ENCODE measurements at regions of chr5 and their contacts with region 1.

Region 1: GRCh38 chr5:149551200-149552037 is at the start of gene CSNK1A1:
- DNase-seq: peak; percentile 98 to 99 (median 99)
- H3K4me3 ChIP-seq: peak within 1 kb of the TSS; percentile 88 to 94
- H3K4me3 Mint-ChIP-seq: peak within 1 kb of the TSS; percentile 94 to 99 (median 98)
- H3K27ac ChIP-seq: peak within 1 kb of the TSS; percentile 97
- H3K27ac Mint-ChIP-seq: peak within 1 kb of the TSS; percentile 95 to 100 (median 98)
- H3K4me1 ChIP-seq: peaks cover 37% of the 10 kb centered on the region
- H3K4me1 Mint-ChIP-seq: peaks cover 18 to 52% (median 27%) of the 10 kb centered on the region in 4 donors
- H3K27me3 ChIP-seq: no peaks in the 10 kb centered on the region
- H3K27me3 Mint-ChIP-seq: no peaks in the 10 kb centered on the region
- total RNA-seq, gene CSNK1A1: 175 to 189 TPM

Region 2: GRCh38 chr5:149240354-149240998 is 310.9 kb before region 1 on chr5:
- CTCF ChIA-PET with region 1: no interaction called
- POLR2A ChIA-PET with region 1: interaction called, 6 read pairs
- intact Hi-C with region 1: loop called (anchors 5 kb)
- DNase-seq: peak; percentile 78 to 91 (median 88)
- H3K4me3 ChIP-seq: peak overlapping the region; percentile 26 to 34
- H3K4me3 Mint-ChIP-seq: peak overlapping the region; percentile 25 to 80 (median 64)
- H3K27ac ChIP-seq: peak overlapping the region; percentile 49
- H3K27ac Mint-ChIP-seq: peak overlapping the region; percentile 81 to 95 (median 89)
- H3K4me1 ChIP-seq: peaks cover 35% of the 10 kb centered on the region
- H3K4me1 Mint-ChIP-seq: peaks cover 29 to 57% (median 37%) of the 10 kb centered on the region in 4 donors
- H3K27me3 ChIP-seq: no peaks in the 10 kb centered on the region
- H3K27me3 Mint-ChIP-seq: no peaks in the 10 kb centered on the region

Region 3: GRCh38 chr5:149268928-149269557 is 282.4 kb before region 1 on chr5:
- CTCF ChIA-PET with region 1: no interaction called
- POLR2A ChIA-PET with region 1: no interaction called
- intact Hi-C with region 1: no loop called
- DNase-seq: peak in 4 of 5 donors; percentile 42 to 62 (median 59)
- H3K4me3 ChIP-seq: no peak overlapping the region
- H3K4me3 Mint-ChIP-seq: peak overlapping the region in 1 of 8 donors; percentile 33
- H3K27ac ChIP-seq: no peak overlapping the region
- H3K27ac Mint-ChIP-seq: peak overlapping the region in 1 of 7 donors; percentile 69
- H3K4me1 ChIP-seq: peaks cover 4% of the 10 kb centered on the region
- H3K4me1 Mint-ChIP-seq: peaks cover 8 to 15% (median 11%) of the 10 kb centered on the region in 4 donors
- H3K27me3 ChIP-seq: peaks cover 22% of the 10 kb centered on the region
- H3K27me3 Mint-ChIP-seq: peaks cover 24 to 28% of the 10 kb centered on the region in 2 donors

Region 4: DNA sequence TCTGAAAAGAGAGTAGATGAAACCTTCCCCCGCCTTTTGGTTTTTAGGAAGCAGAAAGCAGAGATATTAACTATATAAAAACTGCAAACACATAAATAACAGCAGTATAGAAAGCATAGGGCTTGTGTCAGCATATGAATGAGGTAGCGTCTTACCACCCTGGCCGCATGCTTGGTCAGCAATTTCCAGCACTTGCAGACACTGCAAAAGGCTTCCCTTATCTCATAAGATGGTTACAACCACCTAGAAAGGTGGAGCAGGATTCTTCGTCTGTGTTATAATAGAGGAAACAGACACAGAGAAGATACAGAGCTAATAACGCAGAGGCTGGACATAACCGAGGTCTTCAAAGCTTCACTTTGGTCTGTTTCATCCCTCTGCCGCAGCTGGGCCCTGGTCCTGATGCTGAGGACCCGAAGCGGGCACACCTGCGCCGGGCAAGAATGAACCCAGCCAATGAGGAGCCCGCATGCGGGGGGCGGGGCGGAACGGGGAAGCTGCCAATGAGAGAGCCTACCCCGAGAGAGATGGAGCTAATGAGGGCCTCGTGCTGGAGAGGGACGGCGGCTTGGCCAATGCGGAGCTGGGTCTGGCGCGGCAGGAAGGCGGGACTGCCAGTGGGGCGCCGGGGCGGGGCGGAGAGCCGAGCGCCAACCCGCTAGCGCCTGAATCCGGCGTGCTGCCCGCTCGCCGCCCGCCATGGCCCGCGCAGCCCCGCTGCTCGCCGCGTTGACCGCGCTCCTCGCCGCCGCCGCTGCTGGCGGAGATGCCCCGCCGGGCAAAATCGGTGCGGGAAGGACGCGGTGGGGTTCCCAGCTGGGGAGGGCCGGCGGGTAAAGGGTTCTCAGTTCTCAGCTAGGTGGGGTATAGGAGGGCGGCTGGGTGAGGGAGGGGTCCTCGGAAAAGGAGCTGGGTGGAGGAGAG is 193.8 kb before region 1 on chr5 and contains the start of gene PCYOX1L:
- CTCF ChIA-PET with region 1: interaction called, 7 read pairs
- POLR2A ChIA-PET with region 1: interaction called, 20 read pairs
- intact Hi-C with region 1: loop called (anchors 1 kb)
- DNase-seq: peak; percentile 91 to 97 (median 95)
- H3K4me3 ChIP-seq: peak within 1 kb of the TSS; percentile 70 to 82
- H3K4me3 Mint-ChIP-seq: peak within 1 kb of the TSS; percentile 94 to 98 (median 95)
- H3K27ac ChIP-seq: peak within 1 kb of the TSS; percentile 75
- H3K27ac Mint-ChIP-seq: peak within 1 kb of the TSS; percentile 92 to 98 (median 96)
- H3K4me1 ChIP-seq: peaks cover 71% of the 10 kb centered on the region
- H3K4me1 Mint-ChIP-seq: peaks cover 46 to 83% (median 63%) of the 10 kb centered on the region in 4 donors
- H3K27me3 ChIP-seq: no peaks in the 10 kb centered on the region
- H3K27me3 Mint-ChIP-seq: no peaks in the 10 kb centered on the region
- total RNA-seq, gene PCYOX1L: 40.4 to 43.9 TPM

Region 5: GRCh38 chr5:149489605-149490037 is 61.8 kb before region 1 on chr5:
- CTCF ChIA-PET with region 1: no interaction called
- POLR2A ChIA-PET with region 1: interaction called, 3 read pairs
- intact Hi-C with region 1: loop called (anchors 10 kb)
- DNase-seq: no peak
- H3K4me3 ChIP-seq: no peak overlapping the region
- H3K4me3 Mint-ChIP-seq: peak overlapping the region in 1 of 8 donors; percentile 11
- H3K27ac ChIP-seq: no peak overlapping the region
- H3K27ac Mint-ChIP-seq: no peak overlapping the region
- H3K4me1 ChIP-seq: no peaks in the 10 kb centered on the region
- H3K4me1 Mint-ChIP-seq: peaks cover 9 to 22% (median 12%) of the 10 kb centered on the region in 4 donors
- H3K27me3 ChIP-seq: no peaks in the 10 kb centered on the region
- H3K27me3 Mint-ChIP-seq: no peaks in the 10 kb centered on the region

Region 6: DNA sequence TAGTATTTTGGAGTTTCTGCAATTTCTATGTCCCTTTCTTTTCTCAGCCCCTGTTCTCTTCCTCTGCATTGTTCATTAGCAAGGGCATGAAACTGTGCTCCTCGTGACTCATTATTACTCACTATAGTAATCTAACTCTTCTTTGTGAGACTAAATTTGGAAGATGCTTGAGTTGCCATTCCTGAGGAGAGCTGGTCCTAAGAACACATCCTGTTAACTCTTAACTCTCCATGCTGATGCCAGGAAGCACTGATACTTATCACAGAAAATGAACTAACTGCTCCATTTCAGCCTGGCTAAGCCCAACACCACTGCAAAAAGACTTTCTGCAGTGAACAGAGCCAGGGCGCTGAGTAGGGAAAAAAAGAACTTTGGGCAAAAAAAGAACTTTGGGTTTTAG is 10.4 kb after region 1 on chr5:
- CTCF ChIA-PET with region 1: interaction called, 11 read pairs
- POLR2A ChIA-PET with region 1: interaction called, 23 read pairs
- intact Hi-C with region 1: no loop called
- DNase-seq: no peak
- H3K4me3 ChIP-seq: no peak overlapping the region
- H3K4me3 Mint-ChIP-seq: peak overlapping the region in 2 of 8 donors; percentile 61 to 66
- H3K27ac ChIP-seq: no peak overlapping the region
- H3K27ac Mint-ChIP-seq: no peak overlapping the region
- H3K4me1 ChIP-seq: peaks cover 8% of the 10 kb centered on the region
- H3K4me1 Mint-ChIP-seq: peaks cover 8 to 16% (median 11%) of the 10 kb centered on the region in 4 donors
- H3K27me3 ChIP-seq: no peaks in the 10 kb centered on the region
- H3K27me3 Mint-ChIP-seq: no peaks in the 10 kb centered on the region

Measured in CD4-positive, alpha-beta memory T cell (primary cell).